ENCODE measurements at regions of chr3 and their contacts with region 1.

Region 1: DNA sequence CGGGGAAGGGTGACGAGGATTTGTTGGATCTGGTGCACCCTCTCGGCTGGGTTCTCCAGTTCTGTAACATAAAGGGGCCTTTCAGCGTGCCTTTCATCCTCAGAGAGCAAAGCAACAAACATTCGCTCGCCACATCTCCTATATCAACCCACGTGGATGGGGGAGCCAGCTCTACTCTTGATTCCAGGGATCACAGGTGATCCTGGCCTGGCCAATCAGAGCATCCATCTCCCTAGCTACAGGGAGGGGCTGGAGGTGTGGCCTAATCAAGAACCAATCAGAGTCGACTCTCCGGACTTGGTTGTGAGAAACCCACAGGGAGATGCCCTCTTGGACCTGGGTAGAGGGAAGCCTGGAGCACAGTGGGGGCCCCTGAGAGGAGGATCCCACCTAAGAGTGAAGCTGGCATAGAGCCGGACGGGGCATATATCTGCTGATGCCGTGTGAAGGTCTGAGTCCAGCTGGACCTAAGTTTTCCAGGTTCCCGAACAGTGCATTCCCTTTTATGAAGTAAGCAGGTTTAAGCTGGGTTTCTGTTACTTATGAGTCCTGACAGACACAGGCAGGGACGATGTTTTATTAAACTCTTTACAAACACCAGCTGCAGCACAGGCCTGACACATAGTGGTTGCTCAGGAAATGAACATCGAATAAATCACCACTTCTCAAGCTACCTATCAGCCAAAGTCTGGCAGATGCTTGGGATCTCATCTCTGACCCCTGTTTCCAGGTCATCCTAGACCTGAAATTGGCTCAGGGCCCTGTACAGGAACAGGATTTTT is 50.7 kb upstream of the RAD18 start:
- DNase-seq: no peak
- H3K4me3 ChIP-seq: no peak overlapping the region
- CTCF ChIP-seq: peak; percentile 10

Region 2: DNA sequence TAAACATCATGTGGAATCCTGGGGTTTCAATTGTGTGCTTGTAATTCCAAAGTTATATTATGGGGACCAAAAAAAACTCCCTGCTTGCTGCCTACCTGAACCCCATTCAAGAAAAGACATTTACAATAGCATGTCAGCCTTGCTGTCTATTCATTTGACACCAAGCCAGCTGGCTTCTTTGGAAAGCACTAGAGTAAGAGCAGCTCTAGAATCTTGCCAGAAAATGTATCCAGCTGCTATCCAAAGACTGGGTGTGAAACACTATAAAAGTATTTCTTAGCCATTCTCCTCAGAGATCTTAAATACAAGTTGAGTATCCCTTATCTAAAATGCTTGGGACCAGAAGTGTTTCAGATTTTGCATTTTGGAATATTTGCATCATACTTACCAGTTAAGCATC is 138.1 kb before region 1 on chr3:
- CTCF ChIA-PET with region 1: no interaction called
- POLR2A ChIA-PET with region 1: no interaction called
- DNase-seq: no peak
- H3K4me3 ChIP-seq: no peak overlapping the region
- CTCF ChIP-seq: no peak

Region 3: GRCh38 chr3:8996681-8997121 is 17.3 kb before region 1 on chr3:
- CTCF ChIA-PET with region 1: interaction called, 13 read pairs
- POLR2A ChIA-PET with region 1: no interaction called
- DNase-seq: no peak
- H3K4me3 ChIP-seq: no peak overlapping the region
- CTCF ChIP-seq: peak; percentile 34

Measured in AG04449 (cell line).